ENCODE measurements at regions of chr6 and their contacts with region 1.

Region 1: GRCh38 chr6:11496152-11497060 is 41.1 kb upstream of the TMEM170B start:
- DNase-seq: peak in 4 of 5 donors; percentile 33 to 76 (median 61)
- ATAC-seq: peak; percentile 69 to 94 (median 90)
- H3K4me3 ChIP-seq: no peak overlapping the region
- H3K27ac ChIP-seq: peak overlapping the region in 4 of 12 donors; percentile 12 to 56 (median 38)
- H3K4me1 ChIP-seq: peaks cover 0 to 23% (median 6%) of the 10 kb centered on the region in 12 donors
- H3K27me3 ChIP-seq: no peaks in the 10 kb centered on the region
- CTCF ChIP-seq: peak; percentile 73 to 98 (median 92)
- POLR2A ChIP-seq: no peak

Region 2: GRCh38 chr6:10954590-10955010 is 541.8 kb before region 1 on chr6:
- intact Hi-C with region 1: loop called (anchors 5 to 10 kb)
- DNase-seq: peak; percentile 59 to 84 (median 67)
- ATAC-seq: peak in 3 of 4 donors; percentile 68 to 72 (median 71)
- H3K4me3 ChIP-seq: no peak overlapping the region
- H3K27ac ChIP-seq: no peak overlapping the region
- H3K4me1 ChIP-seq: no peaks in the 10 kb centered on the region
- H3K27me3 ChIP-seq: no peaks in the 10 kb centered on the region
- CTCF ChIP-seq: peak; percentile 50 to 81 (median 68)
- POLR2A ChIP-seq: no peak

Region 3: GRCh38 chr6:11161031-11161966 is 335.1 kb before region 1 on chr6:
- intact Hi-C with region 1: loop called in 1 of 10 experiments (anchors 5 kb)
- DNase-seq: no peak
- ATAC-seq: no peak
- H3K4me3 ChIP-seq: no peak overlapping the region
- H3K27ac ChIP-seq: no peak overlapping the region
- H3K4me1 ChIP-seq: no peaks in the 10 kb centered on the region
- H3K27me3 ChIP-seq: no peaks in the 10 kb centered on the region
- CTCF ChIP-seq: no peak
- POLR2A ChIP-seq: no peak

Region 4: DNA sequence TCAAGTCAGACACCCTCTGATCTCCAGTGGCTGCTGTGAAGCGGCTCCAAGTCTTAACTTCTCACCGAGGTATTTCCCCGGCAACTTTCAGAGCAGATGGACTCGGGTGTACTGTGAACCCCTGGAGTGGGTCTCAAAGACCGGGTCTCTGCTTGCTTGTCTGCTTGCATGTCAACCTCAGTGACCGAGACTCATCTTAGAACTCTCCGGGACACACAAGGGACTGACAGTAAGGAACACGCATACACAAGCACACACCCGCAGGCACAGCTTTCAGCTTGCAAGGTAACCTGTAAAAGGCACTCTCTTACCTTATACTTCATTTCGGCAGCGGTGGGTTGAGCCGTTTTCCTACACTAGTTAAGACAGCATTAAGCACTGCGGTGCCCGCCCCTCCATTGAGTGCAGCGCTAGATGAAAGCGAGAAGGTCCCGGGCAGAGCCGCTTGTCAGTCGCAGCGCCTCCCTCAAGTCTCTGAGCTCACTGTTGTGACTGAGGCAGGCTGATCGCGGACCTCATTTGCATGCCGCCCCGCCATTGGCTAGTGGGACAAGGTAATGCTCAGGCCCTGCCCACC is 264.1 kb before region 1 on chr6 and contains the start of gene NEDD9:
- intact Hi-C with region 1: loop called in 1 of 10 experiments (anchors 10 kb)
- DNase-seq: peak; percentile 96
- ATAC-seq: peak; percentile 98 to 99 (median 98)
- H3K4me3 ChIP-seq: peak within 1 kb of the TSS; percentile 30 to 84 (median 71)
- H3K27ac ChIP-seq: peak within 1 kb of the TSS; percentile 84 to 94 (median 88)
- H3K4me1 ChIP-seq: peaks cover 0 to 56% (median 11%) of the 10 kb centered on the region in 12 donors
- H3K27me3 ChIP-seq: no peaks in the 10 kb centered on the region
- CTCF ChIP-seq: peak in 1 of 12 donors; percentile 8
- POLR2A ChIP-seq: peak; percentile 91 to 99
- total RNA-seq, gene NEDD9: 10.2 to 55.7 (median 20.9) TPM

Region 5: DNA sequence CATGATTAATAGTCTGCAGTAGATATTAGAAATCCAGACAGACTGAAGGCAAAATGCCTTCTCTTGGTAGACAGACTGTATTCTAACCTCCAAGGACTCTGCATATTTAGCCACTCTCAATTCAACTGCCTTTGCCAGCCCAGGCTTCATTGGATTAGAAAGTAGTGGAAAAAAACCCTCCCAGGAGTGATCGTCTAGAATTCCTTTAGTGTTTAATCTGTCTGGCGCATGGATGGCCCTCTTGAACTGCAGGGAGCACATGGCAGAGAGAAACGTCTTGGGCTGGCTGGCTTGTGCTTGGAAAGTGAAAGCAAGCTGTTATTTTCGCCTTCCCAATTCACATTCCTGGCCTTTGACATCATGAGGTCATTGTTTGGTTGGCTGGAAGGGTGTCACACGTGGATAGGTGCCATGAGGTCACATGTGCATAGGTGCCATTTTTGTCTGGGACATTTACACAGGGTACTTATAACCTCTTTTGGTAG is 233.1 kb before region 1 on chr6:
- intact Hi-C with region 1: loop called in 1 of 10 experiments (anchors 10 kb)
- DNase-seq: peak; percentile 66 to 84 (median 74)
- ATAC-seq: peak; percentile 87 to 95 (median 94)
- H3K4me3 ChIP-seq: peak overlapping the region in 1 of 12 donors; percentile 1
- H3K27ac ChIP-seq: peak overlapping the region; percentile 25 to 86 (median 72)
- H3K4me1 ChIP-seq: peaks cover 0 to 27% (median 19%) of the 10 kb centered on the region in 12 donors
- H3K27me3 ChIP-seq: no peaks in the 10 kb centered on the region
- CTCF ChIP-seq: no peak
- POLR2A ChIP-seq: no peak

Region 6: GRCh38 chr6:11535801-11536230 is 39.4 kb after region 1 on chr6:
- intact Hi-C with region 1: no loop called
- DNase-seq: no peak
- ATAC-seq: no peak
- H3K4me3 ChIP-seq: no peak overlapping the region
- H3K27ac ChIP-seq: no peak overlapping the region
- H3K4me1 ChIP-seq: peaks cover 0 to 22% (median 8%) of the 10 kb centered on the region in 12 donors
- H3K27me3 ChIP-seq: no peaks in the 10 kb centered on the region
- CTCF ChIP-seq: no peak
- POLR2A ChIP-seq: no peak

Region 7: DNA sequence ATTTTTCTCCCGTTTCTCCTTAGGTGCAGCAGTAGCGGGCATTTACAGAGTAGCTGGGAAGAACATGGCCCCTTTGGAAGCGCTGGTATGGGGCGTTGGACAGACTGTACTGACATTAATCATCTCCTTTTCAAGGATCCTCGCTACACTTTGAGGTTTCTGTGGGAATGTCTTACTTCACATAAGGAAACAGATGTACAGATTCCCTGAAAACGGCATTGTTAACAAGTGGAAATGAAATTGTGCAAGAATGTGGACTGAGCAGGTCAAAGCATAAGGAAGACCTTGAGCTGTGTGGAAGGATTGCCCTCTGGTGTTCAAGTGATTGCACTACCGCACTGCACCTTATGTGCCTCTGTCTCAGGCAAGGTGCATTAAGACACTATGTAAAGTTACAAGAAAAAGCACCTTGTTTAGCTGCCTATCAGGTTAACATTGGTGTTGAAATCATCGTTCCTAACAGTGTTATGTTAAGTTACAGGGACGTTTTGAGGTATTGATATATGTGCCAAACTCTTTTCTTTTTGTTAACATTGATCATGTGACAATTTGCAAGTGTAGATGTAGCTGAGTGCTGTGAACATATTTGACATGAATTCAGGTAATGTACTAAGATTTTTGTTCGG is 79.1 kb after region 1 on chr6:
- intact Hi-C with region 1: loop called in 2 of 10 experiments (anchors 5 to 10 kb)
- DNase-seq: peak in 4 of 5 donors; percentile 27 to 45 (median 39)
- ATAC-seq: peak; percentile 86 to 98 (median 96)
- H3K4me3 ChIP-seq: peak overlapping the region in 2 of 12 donors; percentile 5 to 10
- H3K27ac ChIP-seq: peak overlapping the region in 1 of 12 donors; percentile 24
- H3K4me1 ChIP-seq: peaks cover 0 to 8% (median 0%) of the 10 kb centered on the region in 12 donors
- H3K27me3 ChIP-seq: no peaks in the 10 kb centered on the region
- CTCF ChIP-seq: peak; percentile 75 to 91 (median 80)
- POLR2A ChIP-seq: no peak

Measured in heart left ventricle (tissue), 16 donors.